ENCODE measurements at regions of chr1 and their contacts with region 1.

Region 1: GRCh38 chr1:71049951-71050598 is 2.5 kb upstream of the PTGER3 start:
- DNase-seq: peak; percentile 80
- ATAC-seq: peak; percentile 52
- H3K4me3 ChIP-seq: no peak overlapping the region
- H3K27ac ChIP-seq: no peak overlapping the region
- H3K4me1 ChIP-seq: no peaks in the 10 kb centered on the region
- H3K27me3 ChIP-seq: peaks cover 41% of the 10 kb centered on the region
- CTCF ChIP-seq: peak; percentile 84

Region 2: GRCh38 chr1:70528590-70529333 is 521.3 kb before region 1 on chr1:
- CTCF ChIA-PET with region 1: no interaction called
- POLR2A ChIA-PET with region 1: no interaction called
- intact Hi-C with region 1: loop called (anchors 1 kb)
- DNase-seq: peak; percentile 56
- ATAC-seq: peak; percentile 95
- H3K4me3 ChIP-seq: no peak overlapping the region
- H3K27ac ChIP-seq: no peak overlapping the region
- H3K4me1 ChIP-seq: no peaks in the 10 kb centered on the region
- H3K27me3 ChIP-seq: peaks cover 48% of the 10 kb centered on the region
- CTCF ChIP-seq: peak; percentile 72

Region 3: DNA sequence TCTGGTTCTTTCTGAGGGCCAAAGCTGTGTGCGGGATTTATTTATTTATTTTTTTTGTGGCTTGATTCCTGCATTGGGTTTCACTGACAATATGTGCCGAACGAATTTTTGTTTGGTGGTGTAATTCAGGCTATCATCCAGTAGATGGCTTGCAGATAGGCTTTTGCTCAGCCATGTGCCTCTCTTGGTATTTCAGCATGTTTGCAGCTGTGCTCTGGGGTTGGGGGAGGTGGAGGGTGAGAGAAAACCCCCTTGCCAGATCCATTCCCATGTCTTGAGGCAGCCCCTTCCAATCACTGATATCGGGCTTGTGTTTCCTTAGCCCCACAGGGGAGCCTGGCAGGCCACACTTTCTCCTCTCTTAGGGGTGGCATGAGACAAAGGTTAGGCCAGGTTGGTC is 304.9 kb before region 1 on chr1:
- CTCF ChIA-PET with region 1: no interaction called
- POLR2A ChIA-PET with region 1: no interaction called
- intact Hi-C with region 1: loop called (anchors 1 kb)
- DNase-seq: peak; percentile 43
- ATAC-seq: no peak
- H3K4me3 ChIP-seq: no peak overlapping the region
- H3K27ac ChIP-seq: no peak overlapping the region
- H3K4me1 ChIP-seq: no peaks in the 10 kb centered on the region
- H3K27me3 ChIP-seq: 0 out of 2 replicates have a peak, but pooled peaks cover 8% of the 10 kb centered on the region
- CTCF ChIP-seq: peak; percentile 67

Region 4: DNA sequence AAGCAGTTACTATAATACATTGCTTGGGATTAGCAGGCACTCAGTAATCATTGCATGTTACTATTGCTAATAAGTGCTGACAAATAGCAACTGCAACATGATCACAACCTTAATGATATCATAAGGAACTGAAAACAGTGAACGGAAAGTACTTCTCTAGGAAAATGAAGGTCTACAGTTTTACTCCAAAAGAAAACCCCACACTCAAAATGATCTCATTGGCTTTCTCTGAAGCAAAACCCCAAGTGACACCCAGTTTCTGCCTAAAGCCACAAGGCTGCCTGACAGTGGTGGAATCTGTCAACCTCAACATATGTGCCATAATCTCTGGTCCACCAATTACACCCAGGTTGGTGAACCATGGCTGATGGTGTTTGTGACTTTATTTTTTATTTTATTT is 140.1 kb before region 1 on chr1:
- CTCF ChIA-PET with region 1: no interaction called
- POLR2A ChIA-PET with region 1: no interaction called
- intact Hi-C with region 1: no loop called
- DNase-seq: no peak
- ATAC-seq: no peak
- H3K4me3 ChIP-seq: no peak overlapping the region
- H3K27ac ChIP-seq: no peak overlapping the region
- H3K4me1 ChIP-seq: no peaks in the 10 kb centered on the region
- H3K27me3 ChIP-seq: peaks cover 25% of the 10 kb centered on the region
- CTCF ChIP-seq: no peak

Region 5: DNA sequence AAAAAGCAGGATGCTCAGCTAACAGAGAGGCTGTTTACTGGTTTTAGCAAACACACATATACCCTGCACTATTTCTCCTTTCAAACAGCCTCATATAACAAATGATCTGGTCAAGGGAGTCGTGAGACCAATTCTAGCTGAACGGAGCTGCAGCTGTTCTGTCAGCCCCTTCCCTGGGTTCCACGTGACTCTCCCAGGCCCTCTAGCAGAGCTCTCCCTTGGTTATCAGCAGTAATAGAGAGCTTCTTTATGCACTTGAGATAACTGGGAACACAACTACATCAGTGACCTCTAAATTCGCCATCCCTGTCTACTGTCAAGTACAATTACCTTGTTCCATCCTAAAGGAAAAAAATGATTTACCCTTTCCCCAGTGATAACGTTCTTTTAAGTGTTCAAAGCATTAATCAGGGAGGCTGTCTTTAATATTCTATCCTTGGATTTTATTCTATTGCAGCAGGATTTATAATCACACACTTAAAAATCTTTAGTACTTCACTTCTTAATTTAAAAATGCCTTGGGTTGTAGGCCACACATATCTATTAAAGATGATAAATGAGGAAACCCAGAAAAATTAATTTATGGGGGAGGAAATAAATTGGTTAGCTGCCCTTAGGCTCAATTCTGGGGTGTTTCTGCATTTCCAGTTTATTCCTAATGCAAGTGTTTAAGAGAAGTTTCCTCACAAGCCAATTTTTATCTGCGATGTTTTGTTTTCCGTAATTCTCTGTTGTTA is 30.7 kb before region 1 on chr1:
- CTCF ChIA-PET with region 1: no interaction called
- POLR2A ChIA-PET with region 1: no interaction called
- intact Hi-C with region 1: no loop called
- DNase-seq: no peak
- ATAC-seq: no peak
- H3K4me3 ChIP-seq: no peak overlapping the region
- H3K27ac ChIP-seq: no peak overlapping the region
- H3K4me1 ChIP-seq: no peaks in the 10 kb centered on the region
- H3K27me3 ChIP-seq: peaks cover 51% of the 10 kb centered on the region
- CTCF ChIP-seq: no peak

Region 6: GRCh38 chr1:71106658-71107322 is 56.7 kb after region 1 on chr1:
- CTCF ChIA-PET with region 1: no interaction called
- POLR2A ChIA-PET with region 1: no interaction called
- intact Hi-C with region 1: no loop called
- DNase-seq: peak; percentile 67
- ATAC-seq: peak; percentile 92
- H3K4me3 ChIP-seq: no peak overlapping the region
- H3K27ac ChIP-seq: 0 out of 2 replicates have a peak overlapping the region, but pooled peaks have one; percentile 9
- H3K4me1 ChIP-seq: peaks cover 13% of the 10 kb centered on the region
- H3K27me3 ChIP-seq: no peaks in the 10 kb centered on the region
- CTCF ChIP-seq: no peak

Measured in PC-3 (cell line).